CD14-positive monocyte (primary cell): ENCODE measurements at regions of chrX and their contacts with region 1.

Region 1: GRCh38 chrX:120499301-120500072 is 30.4 kb upstream of the LAMP2 start:
- DNase-seq: no peak
- H3K4me3 ChIP-seq: no peak overlapping the region
- H3K4me3 Mint-ChIP-seq: no peak overlapping the region
- H3K27ac ChIP-seq: no peak overlapping the region
- H3K27ac Mint-ChIP-seq: peak overlapping the region in 1 of 7 donors; percentile 18
- H3K4me1 ChIP-seq: peaks cover 0 to 5% of the 10 kb centered on the region in 2 donors
- H3K4me1 Mint-ChIP-seq: peaks cover 7% of the 10 kb centered on the region
- H3K27me3 ChIP-seq: no peaks in the 10 kb centered on the region
- H3K27me3 Mint-ChIP-seq: peaks cover 0 to 9% (median 2%) of the 10 kb centered on the region in 3 donors
- CTCF ChIP-seq: no peak

Region 2: GRCh38 chrX:120664081-120664480 is 164.6 kb after region 1 on chrX:
- intact Hi-C with region 1: loop called (anchors 5 to 10 kb)
- DNase-seq: peak; percentile 3 to 21 (median 5)
- H3K4me3 ChIP-seq: no peak overlapping the region
- H3K4me3 Mint-ChIP-seq: no peak overlapping the region
- H3K27ac ChIP-seq: no peak overlapping the region
- H3K27ac Mint-ChIP-seq: peak overlapping the region in 1 of 7 donors; percentile 15
- H3K4me1 ChIP-seq: no peaks in the 10 kb centered on the region
- H3K4me1 Mint-ChIP-seq: peaks cover 1% of the 10 kb centered on the region
- H3K27me3 ChIP-seq: no peaks in the 10 kb centered on the region
- H3K27me3 Mint-ChIP-seq: peaks cover 0 to 4% (median 0%) of the 10 kb centered on the region in 3 donors
- CTCF ChIP-seq: peak; percentile 38

Region 3: DNA sequence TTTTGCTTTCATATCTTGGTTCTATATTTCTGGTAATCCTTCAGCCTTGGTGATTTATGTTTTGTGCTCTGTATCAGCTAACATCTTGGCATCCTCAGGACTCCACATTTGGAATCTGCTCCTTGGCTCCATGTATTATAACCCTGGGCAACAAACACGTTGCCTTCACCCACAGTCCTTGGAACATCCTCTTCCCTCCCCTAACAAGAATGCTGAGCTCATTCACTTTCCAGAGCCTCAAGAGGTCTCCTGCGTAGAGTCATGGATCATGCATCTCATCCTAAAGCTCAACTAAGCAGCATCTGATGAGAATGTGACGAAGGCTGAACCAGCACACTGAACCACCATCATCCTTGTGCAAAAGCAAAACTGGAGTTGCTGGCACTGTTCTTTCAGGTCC is 190.9 kb after region 1 on chrX:
- intact Hi-C with region 1: no loop called
- DNase-seq: no peak
- H3K4me3 ChIP-seq: no peak overlapping the region
- H3K4me3 Mint-ChIP-seq: no peak overlapping the region
- H3K27ac ChIP-seq: no peak overlapping the region
- H3K27ac Mint-ChIP-seq: no peak overlapping the region
- H3K4me1 ChIP-seq: no peaks in the 10 kb centered on the region
- H3K4me1 Mint-ChIP-seq: no peaks in the 10 kb centered on the region
- H3K27me3 ChIP-seq: no peaks in the 10 kb centered on the region
- H3K27me3 Mint-ChIP-seq: peaks cover 0 to 3% (median 0%) of the 10 kb centered on the region in 3 donors
- CTCF ChIP-seq: no peak